CD4-positive, alpha-beta memory T cell (primary cell): ENCODE measurements at regions of chr19 and their contacts with region 1.

Region 1: DNA sequence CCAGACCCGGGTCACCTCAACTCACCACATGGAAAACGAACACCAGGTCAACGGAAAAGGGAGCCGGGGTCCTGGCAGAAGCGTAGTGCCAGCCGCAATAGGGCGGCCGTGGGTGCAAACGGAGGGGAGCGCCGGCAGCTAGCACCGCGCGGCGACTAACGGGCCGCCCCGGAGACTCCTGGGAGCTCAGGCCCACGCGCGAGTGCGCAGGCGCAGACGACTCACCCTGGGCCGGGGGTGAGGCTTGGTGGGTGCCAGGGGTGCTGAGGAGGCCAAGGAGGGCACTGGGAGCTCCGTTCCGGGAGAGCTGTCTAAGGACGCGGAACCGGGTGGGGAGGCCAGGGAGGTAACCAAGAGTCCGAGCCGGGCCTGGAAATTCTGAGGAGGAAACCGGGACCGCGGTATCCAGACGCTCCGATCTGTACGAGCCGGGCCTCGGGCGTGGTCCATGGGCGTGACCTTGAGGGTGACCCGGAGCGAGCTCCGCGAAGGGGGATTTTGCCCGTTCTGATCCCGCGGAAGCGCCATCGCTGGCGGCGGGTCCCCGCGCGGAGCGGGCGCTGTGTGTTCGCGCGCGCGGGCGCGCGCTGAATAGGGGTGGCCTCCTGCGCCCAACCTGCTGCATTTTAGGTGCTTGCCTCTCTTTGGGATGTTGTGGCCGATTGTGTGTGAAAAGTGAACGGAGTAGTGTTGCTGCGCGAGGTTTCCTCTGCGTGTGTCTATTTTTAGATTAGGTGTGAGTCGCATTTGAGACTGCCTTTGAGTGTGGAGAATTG is at the start of gene ZNF382:
- DNase-seq: peak; percentile 85 to 89 (median 86)
- H3K4me3 ChIP-seq: peak within 1 kb of the TSS; percentile 32 to 85
- H3K4me3 Mint-ChIP-seq: peak within 1 kb of the TSS; percentile 90 to 99 (median 96)
- H3K27ac ChIP-seq: peak within 1 kb of the TSS; percentile 91
- H3K27ac Mint-ChIP-seq: peak within 1 kb of the TSS; percentile 82 to 98 (median 92)
- H3K4me1 ChIP-seq: peaks cover 16% of the 10 kb centered on the region
- H3K4me1 Mint-ChIP-seq: peaks cover 17 to 33% (median 23%) of the 10 kb centered on the region in 4 donors
- H3K27me3 ChIP-seq: no peaks in the 10 kb centered on the region
- H3K27me3 Mint-ChIP-seq: peaks cover 0 to 1% of the 10 kb centered on the region in 2 donors
- total RNA-seq, gene ZNF382: 21.1 to 21.9 TPM

Region 2: GRCh38 chr19:36363845-36364244 is 241.4 kb before region 1 on chr19:
- CTCF ChIA-PET with region 1: no interaction called
- POLR2A ChIA-PET with region 1: no interaction called
- intact Hi-C with region 1: no loop called
- DNase-seq: no peak
- H3K4me3 ChIP-seq: no peak overlapping the region
- H3K4me3 Mint-ChIP-seq: no peak overlapping the region
- H3K27ac ChIP-seq: no peak overlapping the region
- H3K27ac Mint-ChIP-seq: no peak overlapping the region
- H3K4me1 ChIP-seq: no peaks in the 10 kb centered on the region
- H3K4me1 Mint-ChIP-seq: no peaks in the 10 kb centered on the region
- H3K27me3 ChIP-seq: no peaks in the 10 kb centered on the region
- H3K27me3 Mint-ChIP-seq: no peaks in the 10 kb centered on the region

Region 3: DNA sequence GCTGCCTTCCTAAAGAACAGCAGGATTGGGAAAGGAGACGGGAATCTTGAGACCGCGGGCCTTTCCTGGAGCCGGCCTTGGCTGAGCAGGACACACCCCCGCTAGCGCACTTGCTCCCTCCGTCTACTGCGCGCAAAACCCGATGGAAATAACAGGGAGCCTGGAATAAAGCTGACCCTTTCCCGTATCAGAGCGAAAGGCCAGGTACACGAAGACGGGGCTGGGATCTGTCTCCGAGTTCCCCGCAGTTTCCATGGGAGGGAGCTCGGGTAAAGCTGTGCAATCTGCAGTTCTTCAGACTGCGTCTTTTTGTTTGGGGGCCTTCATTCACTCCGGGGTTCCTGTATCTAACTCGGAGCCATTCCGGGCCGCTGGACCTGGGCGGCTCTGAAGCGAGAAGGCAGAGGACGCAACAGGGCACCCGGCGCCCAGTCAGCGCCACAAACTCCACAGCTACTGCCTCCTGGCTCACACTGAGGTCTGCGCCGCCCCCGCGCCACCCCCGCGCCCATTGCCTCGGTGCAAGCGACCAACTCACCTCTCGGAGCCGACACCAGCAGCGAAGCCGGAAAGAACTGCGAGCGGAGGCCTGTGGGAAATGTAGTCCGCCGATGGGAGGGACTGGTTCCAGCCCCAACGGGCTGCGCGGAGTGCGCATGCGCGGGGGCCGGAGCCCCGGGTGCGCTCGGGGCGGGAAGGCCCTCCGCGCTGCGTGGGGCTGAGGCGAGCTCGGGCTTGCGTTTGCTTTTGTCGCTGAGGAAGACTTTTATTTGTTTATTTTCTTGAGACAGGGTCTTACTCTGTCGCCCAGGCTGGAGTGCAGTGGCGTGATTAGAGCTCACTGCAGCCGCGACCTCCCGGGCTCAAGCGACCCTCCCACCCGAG is 226.4 kb before region 1 on chr19 and contains the start of gene ZFP14:
- CTCF ChIA-PET with region 1: no interaction called
- POLR2A ChIA-PET with region 1: interaction called, 6 read pairs
- intact Hi-C with region 1: loop called (anchors 1 kb)
- DNase-seq: peak; percentile 92 to 96 (median 95)
- H3K4me3 ChIP-seq: peak within 1 kb of the TSS; percentile 76 to 87
- H3K4me3 Mint-ChIP-seq: peak within 1 kb of the TSS; percentile 87 to 96 (median 94)
- H3K27ac ChIP-seq: peak within 1 kb of the TSS; percentile 76
- H3K27ac Mint-ChIP-seq: peak within 1 kb of the TSS; percentile 81 to 97 (median 93)
- H3K4me1 ChIP-seq: peaks cover 18% of the 10 kb centered on the region
- H3K4me1 Mint-ChIP-seq: peaks cover 13 to 34% (median 18%) of the 10 kb centered on the region in 4 donors
- H3K27me3 ChIP-seq: no peaks in the 10 kb centered on the region
- H3K27me3 Mint-ChIP-seq: no peaks in the 10 kb centered on the region
- total RNA-seq, gene ZFP14: 20.7 to 21.2 TPM

Region 4: DNA sequence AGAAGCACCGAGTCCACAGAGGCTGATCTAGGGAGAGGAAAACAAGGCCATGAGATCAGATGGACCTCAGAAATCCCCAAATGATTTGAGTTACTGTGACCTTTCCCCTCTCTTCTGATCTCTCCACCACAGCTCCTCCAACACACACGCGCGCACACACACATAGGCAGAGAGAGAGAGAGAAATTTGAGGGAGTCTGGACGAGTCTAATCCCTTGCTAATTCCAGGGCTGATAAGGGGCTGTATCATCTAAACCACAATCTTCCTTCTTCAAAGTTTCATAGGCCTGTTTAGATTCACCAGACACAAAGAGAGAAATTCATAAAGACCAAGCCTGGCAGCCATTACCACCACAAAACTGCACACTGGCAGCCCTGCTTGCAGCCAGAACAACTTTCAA is 195.4 kb before region 1 on chr19:
- CTCF ChIA-PET with region 1: no interaction called
- POLR2A ChIA-PET with region 1: no interaction called
- intact Hi-C with region 1: no loop called
- DNase-seq: no peak
- H3K4me3 ChIP-seq: no peak overlapping the region
- H3K4me3 Mint-ChIP-seq: no peak overlapping the region
- H3K27ac ChIP-seq: no peak overlapping the region
- H3K27ac Mint-ChIP-seq: no peak overlapping the region
- H3K4me1 ChIP-seq: no peaks in the 10 kb centered on the region
- H3K4me1 Mint-ChIP-seq: peaks cover 0 to 5% (median under 1%) of the 10 kb centered on the region in 4 donors
- H3K27me3 ChIP-seq: no peaks in the 10 kb centered on the region
- H3K27me3 Mint-ChIP-seq: no peaks in the 10 kb centered on the region

Region 5: DNA sequence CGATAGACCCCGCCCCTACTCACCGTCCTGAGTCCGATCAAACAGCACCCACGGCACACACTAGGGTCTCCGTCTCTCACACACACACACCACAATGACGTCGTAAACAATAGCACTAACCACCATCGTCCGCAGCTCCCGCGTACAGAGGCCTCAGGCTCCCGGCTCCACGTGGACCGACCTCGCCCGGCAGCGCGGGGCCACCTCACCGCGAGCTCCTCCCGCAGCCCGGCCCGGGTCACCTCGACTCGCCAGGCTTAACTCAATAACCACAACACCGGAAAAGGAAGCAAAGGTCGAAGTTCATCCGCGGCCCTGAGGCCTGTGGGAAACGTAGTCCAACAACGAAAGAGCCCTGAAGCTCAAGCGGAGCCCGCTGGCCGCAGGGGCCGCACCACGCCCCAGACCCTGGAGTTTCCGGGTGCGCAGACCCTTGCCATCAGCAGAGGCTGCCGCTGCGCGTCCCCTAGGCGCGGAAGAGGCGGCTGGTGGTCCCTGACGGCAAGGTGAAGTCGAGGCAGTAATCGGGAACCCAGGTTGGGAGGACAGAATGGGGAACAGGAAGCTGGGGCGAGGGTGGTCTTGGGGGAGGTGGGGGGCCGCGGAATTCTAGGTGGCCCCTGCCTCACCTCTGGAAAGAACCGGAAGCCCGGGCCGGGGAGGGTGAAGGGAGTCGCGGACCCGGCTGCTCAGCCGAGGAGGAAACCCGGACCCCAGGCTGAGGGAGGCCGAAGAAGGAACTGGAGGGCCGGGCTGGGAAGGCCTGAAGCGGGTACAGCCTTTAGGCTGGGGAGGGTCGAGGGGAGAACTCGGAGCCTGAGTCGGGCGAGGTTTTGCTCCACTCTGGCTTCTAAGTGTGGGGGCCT is 32.0 kb before region 1 on chr19 and contains the start of gene ZNF529:
- CTCF ChIA-PET with region 1: no interaction called
- POLR2A ChIA-PET with region 1: interaction called, 40 read pairs
- intact Hi-C with region 1: loop called (anchors 2 kb)
- DNase-seq: peak; percentile 86 to 98 (median 89)
- H3K4me3 ChIP-seq: peak within 1 kb of the TSS; percentile 70 to 86
- H3K4me3 Mint-ChIP-seq: peak within 1 kb of the TSS; percentile 89 to 98 (median 96)
- H3K27ac ChIP-seq: peak within 1 kb of the TSS; percentile 95
- H3K27ac Mint-ChIP-seq: peak within 1 kb of the TSS; percentile 93 to 100 (median 98)
- H3K4me1 ChIP-seq: peaks cover 22% of the 10 kb centered on the region
- H3K4me1 Mint-ChIP-seq: peaks cover 25 to 39% (median 34%) of the 10 kb centered on the region in 4 donors
- H3K27me3 ChIP-seq: no peaks in the 10 kb centered on the region
- H3K27me3 Mint-ChIP-seq: no peaks in the 10 kb centered on the region
- total RNA-seq, gene ZNF529: 32.8 to 33.5 TPM

Region 6: DNA sequence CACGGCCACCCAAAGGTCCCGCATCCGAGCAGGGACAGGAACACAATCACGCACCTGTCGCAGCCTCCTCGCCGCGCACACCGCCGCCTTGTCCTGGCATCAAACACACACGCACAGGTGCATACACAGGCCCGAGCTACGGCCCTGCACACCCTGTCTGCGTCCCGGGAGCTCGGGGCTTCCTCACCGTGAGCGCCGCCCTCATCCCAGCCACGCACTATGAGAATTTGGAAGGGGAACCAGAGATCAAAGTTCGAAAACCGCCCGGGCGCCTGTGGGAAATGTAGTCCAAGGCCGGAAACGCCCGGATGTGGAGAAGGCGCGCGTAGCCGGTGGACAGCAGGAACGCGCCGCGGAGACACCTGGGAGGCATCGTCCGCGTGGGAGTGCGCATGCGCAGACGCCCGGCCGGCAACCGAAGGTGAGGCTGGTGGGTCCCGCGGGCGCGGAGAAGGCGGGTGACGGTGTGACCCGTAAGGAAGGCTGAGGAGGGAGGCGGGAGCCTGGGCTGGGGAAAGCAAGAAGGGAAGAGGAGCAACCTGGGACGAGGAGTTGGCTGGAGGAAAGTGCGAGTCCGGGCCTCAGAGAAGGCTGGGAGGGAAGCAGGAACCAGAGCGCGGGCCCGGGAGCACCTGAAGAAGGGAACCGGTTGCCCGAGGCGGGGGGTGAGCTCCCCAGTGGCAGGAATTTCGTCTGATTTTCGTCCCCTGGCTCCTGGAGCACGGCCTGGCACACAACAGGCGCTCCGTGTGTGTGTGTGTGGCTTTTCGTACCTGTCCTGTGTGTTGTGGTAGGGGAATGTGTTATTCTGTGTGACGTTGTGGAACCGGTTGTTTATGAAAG is 82.1 kb after region 1 on chr19 and contains the start of gene ZNF567:
- CTCF ChIA-PET with region 1: no interaction called
- POLR2A ChIA-PET with region 1: interaction called, 11 read pairs
- intact Hi-C with region 1: loop called (anchors 1 kb)
- DNase-seq: peak; percentile 94 to 96 (median 95)
- H3K4me3 ChIP-seq: peak within 1 kb of the TSS; percentile 62 to 80
- H3K4me3 Mint-ChIP-seq: peak within 1 kb of the TSS; percentile 97 to 100 (median 99)
- H3K27ac ChIP-seq: peak within 1 kb of the TSS; percentile 75
- H3K27ac Mint-ChIP-seq: peak within 1 kb of the TSS; percentile 95 to 99 (median 97)
- H3K4me1 ChIP-seq: peaks cover 22% of the 10 kb centered on the region
- H3K4me1 Mint-ChIP-seq: peaks cover 22 to 49% (median 30%) of the 10 kb centered on the region in 4 donors
- H3K27me3 ChIP-seq: no peaks in the 10 kb centered on the region
- H3K27me3 Mint-ChIP-seq: no peaks in the 10 kb centered on the region
- total RNA-seq, gene ZNF567: 17.0 to 19.8 TPM

Region 7: DNA sequence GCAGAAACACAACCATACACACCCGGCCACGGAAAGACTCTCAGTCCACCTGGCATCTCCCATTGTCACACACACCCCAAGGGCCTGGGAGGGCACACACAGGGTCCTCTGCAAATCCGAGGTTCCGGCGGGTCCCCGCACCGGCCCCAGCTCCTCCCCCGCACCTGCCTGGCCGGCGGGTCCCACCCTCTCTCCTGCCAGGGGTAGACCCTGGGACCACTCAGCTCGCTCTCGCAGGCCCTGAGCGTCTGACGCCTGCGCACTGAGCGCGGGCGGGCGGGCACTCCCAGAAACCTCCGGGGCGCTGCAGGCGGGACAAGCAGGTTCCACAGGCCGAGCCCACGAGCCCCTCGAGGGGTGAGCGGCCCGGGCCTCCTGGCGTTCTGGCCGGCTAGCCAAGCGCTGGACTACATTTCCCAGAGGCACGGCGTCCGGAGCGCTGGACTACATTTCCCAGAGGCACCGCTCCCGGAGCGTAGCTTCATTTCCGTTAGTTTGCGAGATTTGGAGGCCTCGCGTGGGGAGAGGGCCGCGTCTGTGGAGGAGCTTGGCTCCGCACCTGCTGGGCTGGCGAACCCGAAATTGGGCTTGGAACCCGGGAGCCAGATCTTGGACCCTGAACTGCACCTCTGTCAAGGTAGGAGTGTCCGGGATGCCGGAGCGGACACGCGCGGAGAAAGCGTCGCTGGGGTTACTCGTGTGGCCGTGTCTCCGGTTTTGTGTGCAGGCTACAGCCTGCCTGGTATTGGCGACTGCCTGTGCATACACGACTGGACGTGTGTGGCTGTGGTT is 472.8 kb after region 1 on chr19 and contains the start of gene ZNF420:
- CTCF ChIA-PET with region 1: no interaction called
- POLR2A ChIA-PET with region 1: interaction called, 5 read pairs
- intact Hi-C with region 1: loop called (anchors 2 kb)
- DNase-seq: peak; percentile 85 to 92 (median 87)
- H3K4me3 ChIP-seq: peak within 1 kb of the TSS; percentile 61 to 88
- H3K4me3 Mint-ChIP-seq: peak within 1 kb of the TSS; percentile 90 to 100 (median 98)
- H3K27ac ChIP-seq: peak within 1 kb of the TSS; percentile 73
- H3K27ac Mint-ChIP-seq: peak within 1 kb of the TSS; percentile 85 to 99 (median 95)
- H3K4me1 ChIP-seq: peaks cover 23% of the 10 kb centered on the region
- H3K4me1 Mint-ChIP-seq: peaks cover 22 to 43% (median 27%) of the 10 kb centered on the region in 4 donors
- H3K27me3 ChIP-seq: no peaks in the 10 kb centered on the region
- H3K27me3 Mint-ChIP-seq: no peaks in the 10 kb centered on the region
- total RNA-seq, gene ZNF420: 25.0 to 28.6 TPM